ENCODE measurements at regions of chr3 and their contacts with region 1.

Region 1: DNA sequence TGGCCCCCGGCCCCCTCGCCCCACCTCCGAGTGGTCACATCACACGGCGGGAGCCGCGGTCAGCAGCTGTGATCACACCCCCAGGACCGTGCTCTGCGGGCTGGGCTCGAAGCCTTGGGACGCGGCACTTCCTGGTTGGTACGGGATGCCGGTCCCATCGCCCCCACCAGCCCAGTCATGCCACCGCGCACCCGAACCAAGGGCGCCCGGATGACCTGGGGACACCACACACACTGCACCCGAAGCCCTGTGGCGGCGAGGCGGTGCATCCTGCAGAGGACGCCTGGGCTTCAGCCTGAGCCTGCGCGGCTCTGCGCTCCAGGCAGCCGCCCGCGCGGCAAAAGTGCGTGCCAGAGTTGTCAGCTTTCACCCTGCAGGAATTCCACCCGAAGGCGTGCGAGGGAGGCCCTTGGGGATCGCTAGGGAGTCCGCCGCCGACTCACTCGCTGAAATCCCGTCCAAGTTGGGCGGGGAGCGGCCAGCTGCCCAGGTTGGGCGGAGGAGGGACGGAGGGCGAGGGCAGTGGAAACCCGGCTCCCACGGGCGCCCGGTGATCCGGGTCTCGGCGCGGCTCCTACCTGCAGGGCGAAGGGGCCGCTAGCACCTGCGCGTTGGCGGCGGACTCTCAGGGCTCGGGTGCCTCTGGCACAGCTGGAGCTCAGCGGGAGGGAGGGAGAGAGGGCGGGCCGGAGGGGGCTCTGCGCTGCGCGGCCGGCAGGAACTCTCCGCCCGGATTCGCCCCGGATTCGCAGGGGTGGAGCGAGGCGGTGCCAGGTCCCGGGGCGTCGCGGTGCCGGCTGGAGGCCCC is at the start of gene PLD1:
- DNase-seq: peak; percentile 88 to 90
- ATAC-seq: peak; percentile 85 to 95 (median 88)
- H3K4me3 ChIP-seq: peak within 1 kb of the TSS; percentile 53 to 79 (median 68)
- H3K27ac ChIP-seq: peak within 1 kb of the TSS; percentile 80 to 94 (median 90)
- H3K4me1 ChIP-seq: peaks cover 0 to 73% (median 20%) of the 10 kb centered on the region in 9 donors
- H3K27me3 ChIP-seq: no peaks in the 10 kb centered on the region
- CTCF ChIP-seq: peak in 4 of 9 donors; percentile 13 to 45 (median 34)
- total RNA-seq, gene PLD1: 51.4 to 83.3 (median 67.1) TPM

Region 2: GRCh38 chr3:171736556-171736955 is 73.5 kb before region 1 on chr3:
- intact Hi-C with region 1: no loop called
- DNase-seq: no peak
- ATAC-seq: no peak
- H3K4me3 ChIP-seq: no peak overlapping the region
- H3K27ac ChIP-seq: no peak overlapping the region
- H3K4me1 ChIP-seq: peaks cover 0 to 40% (median 10%) of the 10 kb centered on the region in 9 donors
- H3K27me3 ChIP-seq: no peaks in the 10 kb centered on the region
- CTCF ChIP-seq: no peak

Region 3: GRCh38 chr3:171781711-171782127 is 28.3 kb before region 1 on chr3:
- intact Hi-C with region 1: loop called in 1 of 10 experiments (anchors 1 kb)
- DNase-seq: no peak
- ATAC-seq: no peak
- H3K4me3 ChIP-seq: no peak overlapping the region
- H3K27ac ChIP-seq: no peak overlapping the region
- H3K4me1 ChIP-seq: peaks cover 0 to 27% (median 0%) of the 10 kb centered on the region in 9 donors
- H3K27me3 ChIP-seq: no peaks in the 10 kb centered on the region
- CTCF ChIP-seq: no peak

Region 4: DNA sequence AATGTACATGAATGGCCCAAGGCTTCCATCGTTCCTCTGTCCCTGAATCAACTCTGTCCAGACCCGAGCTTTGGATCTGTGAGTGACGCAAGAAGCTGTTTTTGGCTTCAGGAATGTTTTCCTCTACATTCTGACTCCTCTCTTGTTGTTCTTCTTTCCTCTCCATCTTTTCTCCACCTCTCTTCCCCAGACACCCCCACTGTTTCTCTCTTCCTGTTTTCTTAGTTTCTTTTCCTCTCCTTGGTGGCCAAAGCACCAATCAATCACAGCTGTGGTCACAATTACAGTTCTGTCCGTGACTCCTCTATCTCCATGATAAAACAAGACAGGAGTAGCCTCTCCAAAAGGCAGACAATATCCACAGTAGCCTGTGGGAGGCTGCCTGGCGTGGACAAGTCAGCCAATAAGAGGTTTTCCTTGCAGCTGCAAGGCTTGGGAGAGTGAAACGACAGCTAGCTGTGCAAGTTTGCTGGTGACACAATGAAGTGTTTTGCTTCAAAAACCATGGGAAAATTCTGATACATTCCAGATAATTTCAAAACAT is 28.3 kb after region 1 on chr3:
- intact Hi-C with region 1: loop called in 2 of 10 experiments (anchors 2 kb)
- DNase-seq: peak; percentile 39 to 72
- ATAC-seq: peak; percentile 75 to 85 (median 78)
- H3K4me3 ChIP-seq: peak overlapping the region in 7 of 10 donors; percentile 6 to 36 (median 23)
- H3K27ac ChIP-seq: peak overlapping the region; percentile 53 to 84 (median 78)
- H3K4me1 ChIP-seq: peaks cover 3 to 84% (median 64%) of the 10 kb centered on the region in 9 donors
- H3K27me3 ChIP-seq: no peaks in the 10 kb centered on the region
- CTCF ChIP-seq: peak in 1 of 9 donors; percentile 27